Upper lobe of right lung (tissue), 1 donor: ENCODE measurements at regions of chr15 and their contacts with region 1.

Region 1: DNA sequence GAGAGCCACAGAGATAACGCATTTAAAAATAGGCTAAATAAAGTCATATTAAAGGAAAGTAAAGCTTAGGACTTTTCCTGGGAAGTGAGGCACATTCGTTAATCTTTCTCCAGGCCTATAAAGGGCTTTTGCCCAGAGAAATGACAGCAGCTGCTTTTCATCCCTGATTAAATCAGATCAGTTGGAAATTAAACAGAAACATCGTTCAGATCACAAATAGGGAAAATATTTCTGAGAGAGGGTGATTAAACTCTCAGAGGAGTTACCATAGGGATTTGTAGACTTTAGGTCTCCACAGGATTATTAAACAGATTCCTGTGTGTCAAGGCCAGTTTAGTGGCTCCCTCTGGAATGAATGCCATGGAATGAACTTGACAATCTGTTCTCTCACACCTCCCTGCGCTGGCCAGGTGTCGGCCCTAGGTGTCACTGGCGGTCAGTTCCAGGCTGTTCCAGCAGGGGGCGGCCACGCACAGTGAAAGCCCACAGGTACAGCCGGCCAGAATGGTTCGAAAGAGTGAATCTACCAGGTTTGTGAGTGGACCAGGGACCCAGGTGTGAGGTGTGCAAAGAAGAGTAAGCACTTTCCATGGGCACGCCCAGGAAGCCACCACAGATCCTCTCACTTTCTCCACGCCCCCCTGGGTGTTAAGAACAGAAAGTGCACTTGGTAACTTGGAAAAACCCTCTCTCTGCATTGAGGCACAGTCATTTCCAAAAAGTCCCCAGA is 253.0 kb upstream of the RASGRP1 start:
- DNase-seq: peak; percentile 91
- ATAC-seq: peak; percentile 99
- H3K4me3 ChIP-seq: no peak overlapping the region
- H3K27ac ChIP-seq: no peak overlapping the region
- H3K4me1 ChIP-seq: peaks cover 9% of the 10 kb centered on the region
- H3K27me3 ChIP-seq: no peaks in the 10 kb centered on the region
- CTCF ChIP-seq: peak; percentile 99

Region 2: DNA sequence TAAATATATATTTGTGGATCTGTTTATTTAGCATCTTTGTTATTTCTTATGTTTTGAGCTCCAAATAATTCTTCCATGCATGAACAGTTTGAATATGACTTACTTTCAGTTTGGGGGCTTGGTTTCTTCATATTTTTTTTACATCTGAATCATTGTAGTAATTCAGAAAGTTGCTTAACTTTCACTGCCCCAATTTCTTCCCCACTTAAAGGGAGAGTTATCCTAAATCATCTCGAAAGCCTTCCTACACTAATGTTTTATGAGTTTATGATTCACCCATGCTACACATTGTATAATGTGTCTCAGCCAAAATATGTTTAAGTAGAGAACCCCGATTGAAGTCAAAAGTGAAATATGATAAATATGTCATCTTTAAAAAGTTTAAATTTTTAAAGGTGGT is 517.2 kb before region 1 on chr15:
- intact Hi-C with region 1: no loop called
- DNase-seq: no peak
- ATAC-seq: no peak
- H3K4me3 ChIP-seq: no peak overlapping the region
- H3K27ac ChIP-seq: no peak overlapping the region
- H3K4me1 ChIP-seq: no peaks in the 10 kb centered on the region
- H3K27me3 ChIP-seq: no peaks in the 10 kb centered on the region
- CTCF ChIP-seq: no peak

Region 3: GRCh38 chr15:38886315-38887171 is 69.0 kb after region 1 on chr15:
- intact Hi-C with region 1: no loop called
- DNase-seq: no peak
- ATAC-seq: peak; percentile 77
- H3K4me3 ChIP-seq: no peak overlapping the region
- H3K27ac ChIP-seq: peak overlapping the region; percentile 48
- H3K4me1 ChIP-seq: peaks cover 9% of the 10 kb centered on the region
- H3K27me3 ChIP-seq: no peaks in the 10 kb centered on the region
- CTCF ChIP-seq: no peak

Region 4: DNA sequence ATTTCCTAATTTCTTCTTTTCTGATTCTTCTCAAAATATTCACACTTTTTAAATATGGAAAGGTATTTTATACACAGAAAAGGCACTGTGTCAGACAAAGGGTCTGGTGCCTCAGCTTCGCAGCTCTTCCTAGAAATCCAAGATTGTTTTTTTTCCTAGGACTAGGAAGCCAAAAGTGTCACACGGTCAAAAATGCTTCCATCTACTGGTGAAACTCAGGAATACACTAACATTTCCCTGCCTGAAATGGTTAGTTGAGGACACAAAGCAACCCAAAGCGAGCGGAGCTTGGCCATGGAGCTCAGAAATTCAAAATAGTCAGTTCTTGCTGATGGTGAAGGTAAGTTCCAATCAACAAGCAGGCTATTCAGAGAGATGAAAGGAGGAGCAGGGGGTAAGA is 173.5 kb after region 1 on chr15:
- intact Hi-C with region 1: loop called (anchors 10 kb)
- DNase-seq: no peak
- ATAC-seq: peak; percentile 58
- H3K4me3 ChIP-seq: no peak overlapping the region
- H3K27ac ChIP-seq: no peak overlapping the region
- H3K4me1 ChIP-seq: no peaks in the 10 kb centered on the region
- H3K27me3 ChIP-seq: no peaks in the 10 kb centered on the region
- CTCF ChIP-seq: peak; percentile 45

Region 5: DNA sequence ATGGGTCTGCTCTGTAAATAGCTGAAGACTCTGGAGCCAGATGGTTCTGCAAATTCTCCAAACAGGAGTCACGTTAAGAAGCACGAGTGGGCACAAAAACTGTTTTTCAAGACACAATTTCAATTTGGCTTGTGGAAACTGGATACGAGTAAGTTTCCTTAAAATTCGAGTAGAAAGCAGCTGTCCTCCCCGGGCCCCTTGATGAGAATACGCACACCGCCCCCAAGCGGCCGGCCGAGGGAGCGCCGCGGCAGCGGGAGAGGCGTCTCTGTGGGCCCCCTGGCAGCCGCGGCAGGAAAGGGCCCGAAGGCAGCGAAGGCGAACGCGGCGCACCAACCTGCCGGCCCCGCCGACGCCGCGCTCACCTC is 762.5 kb after region 1 on chr15:
- intact Hi-C with region 1: loop called (anchors 10 kb)
- DNase-seq: peak; percentile 97
- ATAC-seq: peak; percentile 92
- H3K4me3 ChIP-seq: peak overlapping the region; percentile 60
- H3K27ac ChIP-seq: peak overlapping the region; percentile 91
- H3K4me1 ChIP-seq: peaks cover 4% of the 10 kb centered on the region
- H3K27me3 ChIP-seq: no peaks in the 10 kb centered on the region
- CTCF ChIP-seq: peak; percentile 95